ENCODE measurements at regions of chr7 and their contacts with region 1.

Region 1: GRCh38 chr7:74582447-74583039 is 75.0 kb upstream of the GTF2I start:
- DNase-seq: no peak
- ATAC-seq: no peak
- H3K4me3 ChIP-seq: no peak overlapping the region
- H3K27ac ChIP-seq: no peak overlapping the region
- H3K4me1 ChIP-seq: peaks cover 19% of the 10 kb centered on the region
- H3K27me3 ChIP-seq: no peaks in the 10 kb centered on the region
- CTCF ChIP-seq: no peak

Region 2: DNA sequence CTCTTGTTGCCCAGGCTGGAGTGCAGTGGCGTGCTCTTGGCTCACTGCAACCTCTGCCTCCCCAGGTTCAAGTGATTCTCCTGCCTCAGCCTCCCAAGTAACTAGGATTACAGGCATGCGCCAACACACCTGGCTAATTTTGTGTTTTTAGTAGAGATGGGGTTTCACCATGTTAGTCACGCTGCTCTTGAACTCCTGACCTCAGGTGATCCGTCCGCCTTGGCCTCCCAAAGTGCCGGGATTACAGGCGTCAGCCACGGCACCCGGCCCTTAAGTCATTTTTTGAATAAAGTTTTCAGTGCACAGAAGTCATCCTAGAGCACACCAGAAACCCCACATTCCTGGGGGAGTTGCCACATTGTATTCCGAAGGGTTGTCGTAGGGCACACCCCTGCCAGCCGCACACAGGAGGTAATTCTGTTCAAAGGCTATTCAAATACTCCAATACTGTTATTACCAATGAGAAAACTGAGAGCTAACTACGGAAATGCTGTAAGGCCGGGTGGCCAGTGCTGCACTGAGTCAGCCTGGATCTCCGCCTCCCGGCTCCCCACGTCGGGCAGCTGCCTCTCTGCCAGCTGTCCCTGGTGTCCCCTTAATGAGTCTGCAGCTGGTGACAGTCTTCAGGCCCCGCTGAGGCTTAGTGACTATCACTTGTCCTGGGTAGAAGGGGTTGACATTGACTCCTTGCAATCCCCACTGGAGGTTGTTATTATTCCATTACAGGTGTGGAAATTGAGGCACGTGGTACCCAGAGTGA is 319.7 kb before region 1 on chr7:
- CTCF ChIA-PET with region 1: no interaction called
- POLR2A ChIA-PET with region 1: no interaction called
- in situ Hi-C with region 1: no loop called
- intact Hi-C with region 1: no loop called
- DNase-seq: no peak
- ATAC-seq: no peak; the same call in 1 of the 2 replicates
- H3K4me3 ChIP-seq: no peak overlapping the region
- H3K27ac ChIP-seq: no peak overlapping the region
- H3K4me1 ChIP-seq: no peaks in the 10 kb centered on the region
- H3K27me3 ChIP-seq: no peaks in the 10 kb centered on the region
- CTCF ChIP-seq: no peak

Region 3: DNA sequence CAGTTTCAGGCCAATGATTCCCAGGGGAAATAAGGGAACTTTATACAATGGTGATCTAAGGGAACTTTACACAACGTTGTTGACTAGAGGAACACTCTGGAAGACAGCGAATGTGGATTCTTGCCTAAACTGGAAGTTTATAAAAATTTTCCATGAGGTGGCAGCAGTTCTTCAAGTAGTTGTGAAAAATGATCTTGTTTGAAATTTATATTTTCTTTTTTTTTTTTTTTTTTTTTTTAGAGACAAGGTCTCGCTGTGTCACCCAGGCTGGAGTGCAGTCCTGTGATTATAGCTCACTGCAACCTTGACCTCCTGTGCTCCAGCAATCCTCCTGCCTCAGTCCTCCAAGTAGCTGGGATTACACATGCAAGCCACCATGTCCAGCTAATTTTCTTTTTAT is 42.9 kb after region 1 on chr7:
- CTCF ChIA-PET with region 1: no interaction called
- POLR2A ChIA-PET with region 1: no interaction called
- in situ Hi-C with region 1: no loop called
- intact Hi-C with region 1: no loop called
- DNase-seq: no peak
- ATAC-seq: no peak
- H3K4me3 ChIP-seq: no peak overlapping the region
- H3K27ac ChIP-seq: peak overlapping the region; percentile 93
- H3K4me1 ChIP-seq: peaks cover 18% of the 10 kb centered on the region
- H3K27me3 ChIP-seq: no peaks in the 10 kb centered on the region
- CTCF ChIP-seq: no peak

Region 4: DNA sequence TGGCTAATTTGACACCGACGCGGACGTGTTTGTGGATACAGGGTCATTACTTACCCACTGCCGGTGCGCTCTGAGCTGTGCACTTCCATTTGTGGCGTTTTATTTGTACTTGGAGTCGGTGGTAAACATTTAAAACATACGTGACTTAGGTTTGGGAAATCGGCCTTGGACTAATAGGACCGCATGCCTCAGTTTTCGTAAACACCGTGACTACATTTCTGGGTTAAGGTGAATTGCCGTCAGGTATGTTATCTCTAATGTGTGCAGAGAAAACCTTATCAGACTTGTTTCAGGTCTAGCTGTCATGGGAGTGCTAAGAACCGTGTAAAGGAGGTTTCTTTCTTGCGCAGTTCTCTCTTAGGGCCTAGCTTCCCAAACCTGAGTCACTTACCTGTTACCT is 139.6 kb after region 1 on chr7:
- CTCF ChIA-PET with region 1: interaction called, 10 read pairs
- POLR2A ChIA-PET with region 1: no interaction called
- in situ Hi-C with region 1: no loop called
- intact Hi-C with region 1: no loop called
- DNase-seq: no peak
- ATAC-seq: no peak
- H3K4me3 ChIP-seq: no peak overlapping the region
- H3K27ac ChIP-seq: no peak overlapping the region
- H3K4me1 ChIP-seq: peaks cover 4% of the 10 kb centered on the region; the same call in 1 of the 2 replicates
- H3K27me3 ChIP-seq: no peaks in the 10 kb centered on the region
- CTCF ChIP-seq: no peak